Activated CD8-positive, alpha-beta T cell treated with anti-CD3 and anti-CD28 coated beads for 36 hours (primary cell): ENCODE measurements at regions of chr12 and their contacts with region 1.

Region 1: DNA sequence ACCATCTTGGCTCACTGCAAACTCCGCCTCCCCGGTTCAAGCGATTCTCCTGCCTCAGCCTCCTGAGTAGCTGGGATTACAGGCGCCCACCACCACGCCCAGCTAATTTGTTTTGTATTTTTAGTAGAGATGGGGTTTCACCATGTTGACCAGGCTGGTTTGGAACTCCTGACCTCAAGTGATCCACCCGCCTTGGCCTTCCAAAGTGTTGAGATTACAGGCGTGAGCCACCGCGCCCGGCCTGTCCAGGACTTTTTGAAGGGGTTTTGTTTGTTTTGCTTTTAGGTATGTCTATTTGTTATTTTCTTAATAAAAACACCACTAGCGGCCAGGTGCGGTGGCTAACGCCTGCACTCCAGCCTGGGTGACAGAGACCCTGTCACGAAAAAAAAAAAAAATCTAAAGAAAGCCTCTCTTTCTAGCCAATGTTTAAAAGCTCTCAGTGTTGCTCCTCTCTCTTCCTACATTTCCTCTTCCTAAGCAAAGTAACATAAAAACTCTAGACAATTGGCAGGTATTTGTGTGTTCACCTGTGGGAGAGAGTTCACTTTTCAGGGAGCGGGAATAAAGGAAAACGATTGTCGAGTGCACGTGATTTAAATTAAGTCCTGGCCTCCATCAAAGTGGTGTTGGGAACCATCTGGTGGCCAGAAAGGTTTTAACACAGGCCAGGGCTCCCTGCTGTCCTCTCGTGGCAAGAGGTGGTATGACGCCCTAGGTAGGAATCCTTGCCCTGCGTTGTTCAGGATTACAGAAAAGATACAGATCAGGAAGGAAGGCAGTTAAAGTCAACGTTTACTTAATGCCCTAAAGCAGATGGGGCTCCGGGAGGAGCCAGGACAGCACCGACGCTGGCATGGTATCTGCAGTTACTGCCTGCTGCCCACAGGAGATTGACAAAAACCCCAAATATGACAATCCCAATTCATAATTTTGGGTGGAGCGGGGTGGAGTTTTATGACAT is 36.2 kb upstream of the ATP23 start:
- DNase-seq: peak; percentile 91
- ATAC-seq: peak; percentile 100
- H3K4me3 Mint-ChIP-seq: no peak overlapping the region
- H3K27ac Mint-ChIP-seq: peak overlapping the region; percentile 14
- H3K4me1 Mint-ChIP-seq: peaks cover 5% of the 10 kb centered on the region
- H3K27me3 Mint-ChIP-seq: peaks cover 2% of the 10 kb centered on the region
- CTCF ChIP-seq: peak; percentile 100

Region 2: GRCh38 chr12:57765042-57765697 is 140.0 kb before region 1 on chr12:
- CTCF ChIA-PET with region 1: interaction called, 12 read pairs
- POLR2A ChIA-PET with region 1: no interaction called
- intact Hi-C with region 1: no loop called
- DNase-seq: peak; percentile 70
- ATAC-seq: peak; percentile 72
- H3K4me3 Mint-ChIP-seq: peak overlapping the region; percentile 80
- H3K27ac Mint-ChIP-seq: peak overlapping the region; percentile 70
- H3K4me1 Mint-ChIP-seq: peaks cover 28% of the 10 kb centered on the region
- H3K27me3 Mint-ChIP-seq: peaks cover 6% of the 10 kb centered on the region
- CTCF ChIP-seq: peak; percentile 55

Region 3: DNA sequence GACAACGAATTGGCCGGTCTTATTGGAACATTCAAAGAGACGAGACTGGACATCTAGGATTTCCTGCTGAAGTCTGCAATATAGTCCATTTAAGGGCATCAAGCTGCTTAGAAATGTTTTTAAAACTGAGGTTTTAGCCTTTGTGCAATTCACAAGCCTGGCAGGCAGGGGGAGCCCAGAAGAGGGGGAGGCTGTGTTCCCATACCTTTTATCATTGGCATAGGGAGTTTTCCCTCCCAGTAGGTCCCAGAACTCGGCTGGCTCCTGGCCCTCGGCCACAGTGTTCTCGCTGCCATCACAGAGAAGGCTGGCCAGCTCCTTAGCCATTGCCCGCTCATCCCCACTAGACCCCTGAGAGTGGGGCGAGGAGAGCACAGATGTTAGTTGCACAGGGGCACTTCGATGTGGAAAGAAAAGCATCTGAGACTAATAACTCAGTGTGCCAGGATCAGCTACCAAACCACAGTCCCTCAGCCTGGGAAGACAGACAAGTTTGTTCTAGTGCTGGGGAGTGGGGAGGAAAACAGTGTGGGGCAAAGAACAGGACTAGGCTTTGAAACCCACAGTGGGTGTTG is 101.7 kb before region 1 on chr12:
- CTCF ChIA-PET with region 1: interaction called, 124 read pairs
- POLR2A ChIA-PET with region 1: no interaction called
- intact Hi-C with region 1: no loop called
- DNase-seq: peak; percentile 31
- ATAC-seq: peak; percentile 70
- H3K4me3 Mint-ChIP-seq: no peak overlapping the region
- H3K27ac Mint-ChIP-seq: no peak overlapping the region
- H3K4me1 Mint-ChIP-seq: peaks cover 4% of the 10 kb centered on the region
- H3K27me3 Mint-ChIP-seq: no peaks in the 10 kb centered on the region
- CTCF ChIP-seq: peak; percentile 85

Region 4: GRCh38 chr12:57829025-57829777 is 75.9 kb before region 1 on chr12:
- CTCF ChIA-PET with region 1: interaction called, 96 read pairs
- POLR2A ChIA-PET with region 1: interaction called, 12 read pairs
- intact Hi-C with region 1: loop called (anchors 1 kb)
- DNase-seq: no peak
- ATAC-seq: no peak
- H3K4me3 Mint-ChIP-seq: no peak overlapping the region
- H3K27ac Mint-ChIP-seq: peak overlapping the region; percentile 45
- H3K4me1 Mint-ChIP-seq: peaks cover 33% of the 10 kb centered on the region
- H3K27me3 Mint-ChIP-seq: no peaks in the 10 kb centered on the region
- CTCF ChIP-seq: no peak

Region 5: GRCh38 chr12:57852620-57853500 is 52.3 kb before region 1 on chr12:
- CTCF ChIA-PET with region 1: interaction called, 61 read pairs
- POLR2A ChIA-PET with region 1: interaction called, 70 read pairs
- intact Hi-C with region 1: no loop called
- DNase-seq: no peak
- ATAC-seq: no peak
- H3K4me3 Mint-ChIP-seq: peak overlapping the region; percentile 23
- H3K27ac Mint-ChIP-seq: no peak overlapping the region
- H3K4me1 Mint-ChIP-seq: peaks cover 35% of the 10 kb centered on the region
- H3K27me3 Mint-ChIP-seq: peaks cover 18% of the 10 kb centered on the region
- CTCF ChIP-seq: no peak

Region 6: GRCh38 chr12:57918147-57918546 is 13.0 kb after region 1 on chr12:
- CTCF ChIA-PET with region 1: interaction called, 13 read pairs
- POLR2A ChIA-PET with region 1: no interaction called
- intact Hi-C with region 1: no loop called
- DNase-seq: no peak
- ATAC-seq: no peak
- H3K4me3 Mint-ChIP-seq: no peak overlapping the region
- H3K27ac Mint-ChIP-seq: no peak overlapping the region
- H3K4me1 Mint-ChIP-seq: no peaks in the 10 kb centered on the region
- H3K27me3 Mint-ChIP-seq: no peaks in the 10 kb centered on the region
- CTCF ChIP-seq: no peak